ENCODE measurements at regions of chr15 and their contacts with region 1.

Region 1: GRCh38 chr15:67303490-67304363 is 49.1 kb downstream of the IQCH start:
- DNase-seq: peak; percentile 41
- ATAC-seq: peak; percentile 32
- H3K4me3 Mint-ChIP-seq: no peak overlapping the region
- H3K27ac Mint-ChIP-seq: no peak overlapping the region
- H3K4me1 Mint-ChIP-seq: peaks cover 18% of the 10 kb centered on the region
- H3K27me3 Mint-ChIP-seq: peaks cover 6% of the 10 kb centered on the region
- CTCF ChIP-seq: peak; percentile 71

Region 2: DNA sequence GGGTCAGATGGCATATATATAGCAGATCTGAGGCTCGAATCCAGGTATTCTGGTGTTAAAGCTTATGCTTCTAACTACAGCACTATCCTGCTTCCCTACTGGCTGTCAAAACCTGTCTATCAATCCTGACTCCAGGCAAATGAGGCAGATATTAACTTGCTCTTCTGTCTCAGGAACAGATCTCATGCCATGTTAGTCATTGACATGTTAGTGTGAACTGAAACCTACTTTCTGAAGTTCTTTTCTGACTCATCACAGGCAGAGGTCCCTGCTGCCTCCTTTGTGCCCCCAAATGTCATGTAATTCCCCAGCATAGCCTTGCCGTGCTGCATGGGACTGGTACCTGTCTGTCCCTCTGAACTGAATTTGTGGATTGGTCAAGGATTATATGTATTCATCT is 363.4 kb before region 1 on chr15:
- CTCF ChIA-PET with region 1: interaction called, 16 read pairs
- POLR2A ChIA-PET with region 1: interaction called, 3 read pairs
- intact Hi-C with region 1: loop called (anchors 5 kb)
- DNase-seq: peak; percentile 57
- ATAC-seq: peak; percentile 95
- H3K4me3 Mint-ChIP-seq: no peak overlapping the region
- H3K27ac Mint-ChIP-seq: no peak overlapping the region
- H3K4me1 Mint-ChIP-seq: peaks cover 14% of the 10 kb centered on the region
- H3K27me3 Mint-ChIP-seq: no peaks in the 10 kb centered on the region
- CTCF ChIP-seq: no peak

Region 3: DNA sequence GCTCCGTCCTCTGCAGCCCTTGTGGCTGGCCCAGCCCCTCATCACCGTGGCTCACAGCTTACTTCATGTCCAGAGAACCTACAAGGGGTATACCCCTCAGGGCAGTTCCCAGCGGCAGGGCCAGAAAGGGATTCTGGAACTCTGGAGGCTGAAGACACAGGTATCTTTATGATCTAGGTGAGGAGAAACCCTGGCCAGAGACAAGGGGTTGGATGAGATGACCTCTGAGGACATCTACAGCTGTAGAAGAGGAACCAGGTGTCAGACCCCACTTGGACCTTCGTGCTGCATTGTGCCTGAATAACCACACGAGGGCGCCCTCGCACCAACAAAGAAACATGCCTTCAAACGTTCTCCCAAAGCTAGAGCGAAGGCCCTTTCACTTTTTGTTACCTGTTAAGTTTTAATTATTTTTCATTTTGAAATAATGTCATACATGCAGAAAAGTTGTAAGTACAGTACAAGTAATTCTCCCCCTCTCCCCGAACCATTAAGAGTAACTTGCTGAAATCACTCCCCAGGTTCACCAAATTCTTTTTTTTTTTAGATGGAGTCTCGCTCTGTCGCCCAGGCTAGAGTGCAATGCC is 357.1 kb before region 1 on chr15:
- CTCF ChIA-PET with region 1: interaction called, 75 read pairs
- POLR2A ChIA-PET with region 1: interaction called, 4 read pairs
- intact Hi-C with region 1: loop called (anchors 5 kb)
- DNase-seq: peak; percentile 82
- ATAC-seq: peak; percentile 89
- H3K4me3 Mint-ChIP-seq: no peak overlapping the region
- H3K27ac Mint-ChIP-seq: no peak overlapping the region
- H3K4me1 Mint-ChIP-seq: peaks cover 2% of the 10 kb centered on the region
- H3K27me3 Mint-ChIP-seq: no peaks in the 10 kb centered on the region
- CTCF ChIP-seq: peak; percentile 89

Region 4: GRCh38 chr15:66981771-66982170 is 322.0 kb before region 1 on chr15:
- CTCF ChIA-PET with region 1: no interaction called
- POLR2A ChIA-PET with region 1: no interaction called
- intact Hi-C with region 1: no loop called
- DNase-seq: no peak
- ATAC-seq: no peak
- H3K4me3 Mint-ChIP-seq: no peak overlapping the region
- H3K27ac Mint-ChIP-seq: no peak overlapping the region
- H3K4me1 Mint-ChIP-seq: no peaks in the 10 kb centered on the region
- H3K27me3 Mint-ChIP-seq: peaks cover 4% of the 10 kb centered on the region
- CTCF ChIP-seq: no peak

Region 5: DNA sequence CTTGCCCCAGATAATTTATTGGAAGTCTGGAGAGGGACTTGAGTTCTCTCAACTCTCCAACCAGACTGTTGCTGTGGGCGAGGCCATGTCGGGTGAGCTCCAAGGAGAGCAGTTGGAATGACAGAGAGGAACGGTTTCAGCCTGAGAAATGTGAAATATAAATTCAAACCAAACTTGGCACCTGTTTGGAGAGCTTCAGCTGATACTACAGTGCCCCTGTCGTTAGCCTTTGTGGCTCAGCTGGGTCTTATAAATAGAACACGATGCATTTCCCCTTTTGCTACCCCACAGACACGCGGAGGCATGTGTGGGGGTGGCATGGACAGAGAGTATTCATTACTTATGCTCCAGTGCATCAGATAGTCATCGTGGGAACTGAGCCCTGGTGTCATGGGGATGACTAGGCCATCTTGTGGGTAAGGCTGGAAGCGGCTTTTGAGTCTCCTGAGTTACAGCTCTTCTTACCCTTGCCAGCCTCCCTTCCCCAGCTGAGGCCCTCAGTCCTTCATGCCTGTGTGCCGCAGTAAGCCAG is 222.8 kb before region 1 on chr15:
- CTCF ChIA-PET with region 1: no interaction called
- POLR2A ChIA-PET with region 1: no interaction called
- intact Hi-C with region 1: loop called (anchors 10 kb)
- DNase-seq: peak; percentile 84
- ATAC-seq: peak; percentile 29
- H3K4me3 Mint-ChIP-seq: no peak overlapping the region
- H3K27ac Mint-ChIP-seq: peak overlapping the region; percentile 69
- H3K4me1 Mint-ChIP-seq: peaks cover 72% of the 10 kb centered on the region
- H3K27me3 Mint-ChIP-seq: no peaks in the 10 kb centered on the region
- CTCF ChIP-seq: no peak

Region 6: DNA sequence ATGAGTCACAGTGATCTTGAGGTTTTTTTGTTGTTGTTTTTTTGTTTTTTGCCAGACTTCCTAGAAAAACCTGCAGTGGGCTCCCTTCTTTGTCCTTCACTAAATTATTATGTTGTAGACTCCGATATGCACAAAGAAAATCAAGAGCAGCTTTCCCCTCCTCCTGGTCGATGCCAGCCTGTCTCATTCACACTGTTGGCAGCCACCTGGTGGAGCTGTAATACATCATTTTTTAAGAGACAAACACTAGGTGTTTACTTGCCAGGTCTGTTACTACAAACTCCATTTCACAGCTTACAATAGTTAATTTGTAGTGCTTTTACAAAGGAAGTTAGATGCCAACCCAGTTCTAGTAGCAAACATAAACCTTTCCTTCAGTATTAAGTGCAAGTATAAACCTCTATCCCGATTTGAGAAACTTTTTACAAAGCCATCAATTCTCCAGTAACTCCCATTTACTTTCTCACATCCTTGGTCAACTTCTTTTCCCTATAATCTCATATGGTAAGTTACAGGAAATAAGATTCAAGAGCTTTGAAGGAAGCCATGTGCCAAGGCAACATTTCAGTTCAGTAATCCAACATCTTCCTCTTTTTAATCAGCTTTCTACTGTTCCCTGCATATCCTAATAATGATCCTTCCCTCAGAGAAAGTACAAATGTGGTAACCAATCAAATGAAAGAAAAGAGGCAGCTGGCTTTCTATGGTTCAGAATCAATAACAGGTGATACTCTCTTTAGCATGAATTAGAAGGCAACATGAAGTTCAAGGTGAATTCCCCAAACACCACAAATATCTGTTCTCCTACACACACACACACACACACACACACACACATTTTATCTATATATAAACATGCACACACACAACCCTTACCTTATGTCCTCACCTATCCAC is 63.2 kb before region 1 on chr15:
- CTCF ChIA-PET with region 1: interaction called, 5 read pairs
- POLR2A ChIA-PET with region 1: no interaction called
- intact Hi-C with region 1: loop called (anchors 2 kb)
- DNase-seq: peak; percentile 35
- ATAC-seq: peak; percentile 38
- H3K4me3 Mint-ChIP-seq: no peak overlapping the region
- H3K27ac Mint-ChIP-seq: peak overlapping the region; percentile 81
- H3K4me1 Mint-ChIP-seq: peaks cover 53% of the 10 kb centered on the region
- H3K27me3 Mint-ChIP-seq: no peaks in the 10 kb centered on the region
- CTCF ChIP-seq: peak; percentile 52

Region 7: DNA sequence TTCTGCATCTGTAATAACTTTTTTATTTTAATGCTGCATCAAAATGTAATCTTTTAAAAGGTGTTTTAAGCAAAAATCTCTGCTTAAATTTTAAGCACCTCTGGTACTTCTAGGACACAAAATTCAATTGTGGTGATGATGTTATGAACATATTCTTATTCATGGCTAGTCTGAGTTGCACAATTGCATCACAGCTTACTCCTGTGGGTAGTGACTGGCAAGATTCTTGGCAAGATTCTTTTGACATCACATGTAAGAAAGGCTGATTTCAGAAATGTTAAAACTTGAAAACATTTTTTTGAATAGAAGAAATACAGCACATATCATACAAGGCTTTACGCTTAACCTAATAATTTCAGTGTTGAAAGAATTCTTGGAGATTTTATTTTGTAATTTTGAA is 13.4 kb before region 1 on chr15:
- CTCF ChIA-PET with region 1: interaction called, 11 read pairs
- POLR2A ChIA-PET with region 1: no interaction called
- intact Hi-C with region 1: no loop called
- DNase-seq: no peak
- ATAC-seq: no peak
- H3K4me3 Mint-ChIP-seq: no peak overlapping the region
- H3K27ac Mint-ChIP-seq: no peak overlapping the region
- H3K4me1 Mint-ChIP-seq: no peaks in the 10 kb centered on the region
- H3K27me3 Mint-ChIP-seq: no peaks in the 10 kb centered on the region
- CTCF ChIP-seq: no peak

Measured in activated CD8-positive, alpha-beta T cell treated with anti-CD3 and anti-CD28 coated beads for 36 hours (primary cell).